HEK293 (cell line): ENCODE measurements at regions of chr2 and their contacts with region 1.

Region 1: GRCh38 chr2:231713730-231714430 is 5.6 kb downstream of the PTMA start:
- H3K4me3 ChIP-seq: no peak overlapping the region
- H3K27ac ChIP-seq: peak overlapping the region; percentile 32
- H3K4me1 ChIP-seq: peaks cover 10% of the 10 kb centered on the region
- CTCF ChIP-seq: peak; percentile 98

Region 2: GRCh38 chr2:231463698-231464575 is 249.9 kb before region 1 on chr2 and contains the start of gene NCL:
- CTCF ChIA-PET with region 1: interaction called, 4 read pairs
- POLR2A ChIA-PET with region 1: interaction called, 14 read pairs
- H3K4me3 ChIP-seq: peak within 1 kb of the TSS; percentile 83
- H3K27ac ChIP-seq: peak within 1 kb of the TSS; percentile 99
- H3K4me1 ChIP-seq: no peaks in the 10 kb centered on the region
- CTCF ChIP-seq: peak; percentile 59

Region 3: GRCh38 chr2:231648587-231649174 is 65.2 kb before region 1 on chr2:
- CTCF ChIA-PET with region 1: interaction called, 21 read pairs
- POLR2A ChIA-PET with region 1: no interaction called
- H3K4me3 ChIP-seq: no peak overlapping the region
- H3K27ac ChIP-seq: no peak overlapping the region
- H3K4me1 ChIP-seq: no peaks in the 10 kb centered on the region
- CTCF ChIP-seq: peak; percentile 95

Region 4: DNA sequence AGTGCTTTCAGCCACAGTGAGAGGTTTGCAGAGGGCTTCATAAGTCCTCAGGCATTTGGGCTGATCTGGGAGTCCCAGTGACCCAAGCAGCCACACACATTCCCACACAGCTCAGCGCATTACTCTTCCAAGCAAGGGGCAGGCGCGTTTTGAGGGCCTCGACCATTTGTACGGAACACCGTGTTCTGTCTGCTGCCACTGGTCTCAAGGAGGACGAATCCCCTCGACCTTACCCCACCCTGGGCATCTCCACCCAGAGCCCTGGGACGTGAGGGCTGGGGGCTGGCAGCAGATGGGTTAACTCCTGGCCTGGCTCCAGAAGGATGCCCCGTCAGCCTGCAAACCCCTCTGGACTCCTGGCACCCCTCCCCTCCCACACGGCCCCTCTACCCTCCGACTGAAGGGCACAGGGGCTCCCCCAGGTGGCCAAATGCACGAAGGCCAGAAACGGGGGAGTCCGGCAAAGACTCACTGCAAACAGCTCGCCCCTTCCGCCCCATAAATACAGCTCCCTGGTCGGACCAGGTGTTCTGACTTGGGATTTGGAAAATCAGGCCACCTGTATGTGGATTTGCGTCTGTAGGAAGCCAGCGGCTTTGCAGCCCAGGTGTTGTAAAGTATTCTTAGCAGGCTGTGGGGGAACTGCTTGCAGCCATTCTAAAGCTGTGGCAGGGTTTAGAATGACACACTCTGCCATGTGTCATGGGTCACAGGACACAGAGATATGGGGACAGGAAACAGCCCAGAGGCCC is 39.1 kb before region 1 on chr2:
- CTCF ChIA-PET with region 1: interaction called, 182 read pairs
- POLR2A ChIA-PET with region 1: interaction called, 29 read pairs
- H3K4me3 ChIP-seq: no peak overlapping the region
- H3K27ac ChIP-seq: no peak overlapping the region
- H3K4me1 ChIP-seq: no peaks in the 10 kb centered on the region
- CTCF ChIP-seq: peak; percentile 82

Region 5: GRCh38 chr2:231696007-231696371 is 17.9 kb before region 1 on chr2:
- CTCF ChIA-PET with region 1: interaction called, 10 read pairs
- POLR2A ChIA-PET with region 1: interaction called, 13 read pairs
- H3K4me3 ChIP-seq: no peak overlapping the region
- H3K27ac ChIP-seq: no peak overlapping the region
- H3K4me1 ChIP-seq: no peaks in the 10 kb centered on the region
- CTCF ChIP-seq: no peak

Region 6: GRCh38 chr2:231727621-231728020 is 13.7 kb after region 1 on chr2:
- CTCF ChIA-PET with region 1: interaction called, 23 read pairs
- POLR2A ChIA-PET with region 1: no interaction called
- H3K4me3 ChIP-seq: no peak overlapping the region
- H3K27ac ChIP-seq: no peak overlapping the region
- H3K4me1 ChIP-seq: no peaks in the 10 kb centered on the region
- CTCF ChIP-seq: no peak

Region 7: GRCh38 chr2:231786177-231786916 is 72.5 kb after region 1 on chr2 and contains the start of gene COPS7B:
- CTCF ChIA-PET with region 1: interaction called, 20 read pairs
- POLR2A ChIA-PET with region 1: interaction called, 5 read pairs
- H3K4me3 ChIP-seq: peak within 1 kb of the TSS; percentile 88
- H3K27ac ChIP-seq: peak within 1 kb of the TSS; percentile 56
- H3K4me1 ChIP-seq: peaks cover 8% of the 10 kb centered on the region; the same call in 1 of the 2 replicates
- CTCF ChIP-seq: peak; percentile 88